ENCODE measurements at regions of chr11 and their contacts with region 1.

Region 1: DNA sequence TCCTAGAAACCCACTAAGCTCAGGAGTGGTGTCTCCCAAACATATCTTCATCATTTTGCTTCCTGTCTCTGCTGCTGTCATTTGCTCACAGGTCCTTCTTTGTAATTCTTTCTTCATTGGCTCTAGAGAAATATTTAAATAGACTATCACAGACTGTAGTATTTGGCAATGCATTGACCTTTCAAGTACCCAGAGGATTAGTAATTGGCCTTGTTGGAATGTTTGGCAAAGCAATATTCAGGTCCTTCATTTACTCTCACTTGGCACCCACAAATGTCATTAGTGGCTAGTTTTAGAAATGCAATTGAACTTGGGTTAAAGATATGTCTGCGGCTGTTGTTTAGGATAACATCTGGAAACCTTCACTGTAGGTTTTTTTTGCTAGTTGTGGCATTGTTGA is 11.6 kb downstream of the OR4C5 start:
- DNase-seq: no peak
- ATAC-seq: no peak
- H3K4me3 ChIP-seq: no peak overlapping the region
- H3K27ac ChIP-seq: no peak overlapping the region
- H3K4me1 ChIP-seq: no peaks in the 10 kb centered on the region
- H3K27me3 ChIP-seq: no peaks in the 10 kb centered on the region
- CTCF ChIP-seq: no peak
- EP300 ChIP-seq: no peak
- POLR2A ChIP-seq: no peak
- RAD21 ChIP-seq: no peak

Region 2: DNA sequence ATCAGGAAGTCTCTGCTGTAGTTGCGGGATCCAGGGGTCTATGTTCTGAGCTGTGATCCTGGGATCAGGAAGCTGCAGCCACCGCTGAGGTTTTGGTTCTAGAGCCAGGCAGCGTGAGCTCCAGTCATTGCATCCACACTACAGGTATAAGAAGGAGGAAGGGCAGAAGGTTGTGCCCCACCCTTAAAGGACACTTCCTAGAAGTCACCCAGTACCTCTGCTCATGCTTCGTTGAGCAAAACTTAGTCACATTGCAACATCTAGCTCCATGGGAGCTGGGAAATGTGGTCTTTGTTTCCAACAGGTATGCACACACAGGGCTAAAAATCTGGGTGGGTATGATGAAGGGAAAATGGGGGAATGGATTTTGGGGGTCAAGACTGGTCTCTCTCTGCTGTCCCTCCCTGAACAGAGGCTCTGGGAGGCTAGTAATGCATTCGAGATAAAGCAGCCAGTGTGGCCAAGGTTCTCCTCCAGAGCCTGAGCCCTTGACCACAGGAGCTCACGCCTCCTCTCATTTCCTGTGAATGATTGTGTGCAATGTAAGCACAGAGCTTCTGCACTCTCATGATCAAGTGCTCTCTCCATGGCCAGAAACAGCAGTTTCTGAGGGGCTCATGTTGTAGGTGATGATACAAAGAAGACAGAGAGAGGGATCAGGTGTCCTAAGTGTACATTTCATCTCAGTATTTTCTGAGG is 224.8 kb before region 1 on chr11:
- CTCF ChIA-PET with region 1: no interaction called
- POLR2A ChIA-PET with region 1: no interaction called
- in situ Hi-C with region 1: no loop called
- intact Hi-C with region 1: no loop called
- DNase-seq: no peak
- ATAC-seq: no peak
- H3K4me3 ChIP-seq: no peak overlapping the region
- H3K27ac ChIP-seq: no peak overlapping the region
- H3K4me1 ChIP-seq: no peaks in the 10 kb centered on the region
- H3K27me3 ChIP-seq: no peaks in the 10 kb centered on the region
- CTCF ChIP-seq: no peak
- EP300 ChIP-seq: no peak
- POLR2A ChIP-seq: no peak
- RAD21 ChIP-seq: no peak

Region 3: DNA sequence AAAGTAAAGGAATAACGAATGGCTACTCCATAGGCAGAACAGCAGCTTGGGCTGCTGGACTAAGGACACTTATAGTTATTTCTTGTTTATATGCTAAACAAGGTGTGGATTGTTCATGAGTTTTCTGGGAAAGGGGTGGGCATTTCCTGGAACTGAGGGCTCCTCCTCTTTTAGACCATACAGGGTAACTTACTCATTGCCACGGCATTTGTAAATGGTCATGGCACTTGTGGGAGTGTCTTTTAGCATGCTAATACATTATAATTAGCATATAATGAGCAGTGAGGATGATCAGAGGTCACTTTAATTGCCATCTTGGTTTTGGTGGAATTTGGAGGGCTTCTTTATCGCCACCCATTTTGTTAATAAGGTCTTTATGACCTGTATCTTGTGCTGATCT is 84.1 kb before region 1 on chr11:
- CTCF ChIA-PET with region 1: no interaction called
- POLR2A ChIA-PET with region 1: no interaction called
- in situ Hi-C with region 1: loop called (anchors 25 kb)
- intact Hi-C with region 1: no loop called
- DNase-seq: no peak
- ATAC-seq: no peak
- H3K4me3 ChIP-seq: no peak overlapping the region
- H3K27ac ChIP-seq: no peak overlapping the region
- H3K4me1 ChIP-seq: no peaks in the 10 kb centered on the region
- H3K27me3 ChIP-seq: no peaks in the 10 kb centered on the region
- CTCF ChIP-seq: no peak
- EP300 ChIP-seq: no peak
- POLR2A ChIP-seq: no peak
- RAD21 ChIP-seq: no peak

Measured in HepG2 (cell line).